HEK293T (cell line): ENCODE measurements at regions of chr6 and their contacts with region 1.

Region 1: DNA sequence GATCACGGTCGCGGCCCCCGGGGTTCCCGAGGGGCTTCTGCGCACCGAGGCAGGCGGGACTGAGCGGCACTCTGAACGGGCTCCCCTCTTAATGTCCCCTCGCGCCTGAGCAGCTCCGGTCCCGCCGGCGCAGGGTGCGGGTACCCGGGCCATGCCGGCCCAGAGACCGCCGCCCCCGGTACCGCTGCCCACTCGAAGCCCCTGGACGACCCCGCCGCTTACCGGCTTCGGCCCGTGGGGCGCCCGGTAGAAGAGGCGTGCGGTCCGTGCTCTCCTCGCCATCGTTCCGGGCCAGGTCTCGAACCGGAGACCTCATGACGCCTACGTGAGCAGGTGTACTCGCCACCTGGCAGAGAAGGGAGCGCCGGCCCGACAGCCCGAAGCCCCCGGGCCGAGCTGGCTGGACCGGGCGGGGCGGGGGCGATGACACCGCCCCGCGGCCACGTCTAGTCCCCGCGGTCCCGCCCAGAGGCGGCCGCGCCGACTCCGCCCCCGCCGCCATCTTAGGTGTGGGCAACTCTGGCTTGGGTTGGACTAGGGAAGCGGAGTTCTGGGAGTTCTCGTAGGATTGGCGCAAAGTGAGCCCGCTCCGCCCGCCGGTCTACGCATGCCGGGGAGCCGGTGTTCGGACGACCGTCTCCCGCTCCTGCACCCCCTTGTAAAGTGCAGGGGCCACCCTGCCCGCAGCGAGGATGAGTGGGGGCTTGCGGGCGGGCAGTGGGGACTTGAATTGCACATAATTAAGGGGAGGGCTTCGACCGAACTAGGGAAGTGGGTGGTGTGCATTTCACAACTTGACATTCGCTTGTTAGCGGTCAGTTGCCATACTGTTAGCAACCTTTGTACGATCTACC is at the start of gene SLC17A5:
- DNase-seq: peak; percentile 91

Region 2: DNA sequence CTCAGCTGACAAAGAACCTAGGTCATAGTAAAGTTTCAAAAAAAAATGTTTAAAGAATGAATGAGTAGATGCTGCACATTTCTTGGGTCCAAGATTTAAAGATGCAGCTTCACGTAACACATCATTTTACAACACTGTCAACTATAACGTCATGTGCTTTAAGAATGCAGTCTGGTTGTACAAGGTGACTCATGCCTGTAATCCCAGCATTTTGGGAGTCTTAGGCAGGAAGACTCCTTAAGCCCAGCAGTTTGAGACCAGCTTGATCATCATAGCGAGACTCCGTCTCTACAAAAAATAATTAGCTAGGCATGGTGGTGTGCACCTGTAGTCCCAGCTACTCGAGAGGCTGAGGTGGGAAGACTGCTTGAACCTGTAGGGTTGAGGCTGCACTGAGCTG is 21.9 kb before region 1 on chr6:
- CTCF ChIA-PET with region 1: interaction called, 3 read pairs
- POLR2A ChIA-PET with region 1: interaction called, 10 read pairs
- DNase-seq: no peak

Region 3: GRCh38 chr6:73675466-73676098 is 21.8 kb after region 1 on chr6:
- CTCF ChIA-PET with region 1: interaction called, 11 read pairs
- POLR2A ChIA-PET with region 1: no interaction called
- DNase-seq: peak; percentile 80